Endothelial cell of umbilical vein (primary cell): ENCODE measurements at regions of chr3 and their contacts with region 1.

Region 1: DNA sequence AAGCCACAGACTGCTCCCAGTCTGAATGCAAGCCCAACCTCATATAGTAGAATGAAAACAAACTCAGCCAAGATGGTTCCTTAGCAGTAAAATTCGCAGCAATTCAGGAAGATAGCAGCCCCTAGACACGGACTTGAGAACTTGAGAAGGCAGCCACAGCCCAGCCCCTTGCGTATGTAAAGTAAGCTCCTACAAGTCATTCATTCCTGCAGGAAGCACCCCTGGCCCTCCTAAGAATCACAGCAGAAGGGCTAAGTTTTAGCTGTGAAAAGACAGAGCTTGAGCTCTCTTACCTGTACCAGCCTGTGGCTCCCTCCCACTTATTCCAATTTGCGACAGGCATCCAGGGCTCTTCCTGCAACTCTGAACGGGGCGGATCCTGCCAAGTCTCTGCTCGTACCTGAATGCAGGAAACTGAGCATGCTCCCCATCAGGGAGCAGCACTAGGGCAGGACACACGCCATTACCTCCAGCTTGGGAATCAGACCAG is 136.4 kb downstream of the MAGI1 start:
- DNase-seq: no peak
- H3K4me3 ChIP-seq: no peak overlapping the region
- H3K27ac ChIP-seq: no peak overlapping the region
- H3K4me1 ChIP-seq: peaks cover 37% of the 10 kb centered on the region
- H3K27me3 ChIP-seq: no peaks in the 10 kb centered on the region
- CTCF ChIP-seq: no peak
- POLR2A ChIP-seq: no peak

Region 2: GRCh38 chr3:65548848-65549625 is 353.3 kb before region 1 on chr3:
- CTCF ChIA-PET with region 1: no interaction called
- POLR2A ChIA-PET with region 1: no interaction called
- dilution Hi-C with region 1: no loop called
- intact Hi-C with region 1: no loop called
- DNase-seq: no peak
- H3K4me3 ChIP-seq: peak overlapping the region in 2 of 3 experiments; percentile 21 to 40
- H3K27ac ChIP-seq: no peak overlapping the region
- H3K4me1 ChIP-seq: peaks cover 2% of the 10 kb centered on the region
- H3K27me3 ChIP-seq: peaks cover 0 to 12% of the 10 kb centered on the region in 2 experiments
- CTCF ChIP-seq: no peak
- POLR2A ChIP-seq: no peak

Region 3: GRCh38 chr3:65888980-65889706 is 13.2 kb before region 1 on chr3:
- CTCF ChIA-PET with region 1: interaction called, 4 read pairs
- POLR2A ChIA-PET with region 1: no interaction called
- dilution Hi-C with region 1: no loop called
- intact Hi-C with region 1: loop called (anchors 1 kb)
- DNase-seq: peak; percentile 56
- H3K4me3 ChIP-seq: no peak overlapping the region
- H3K27ac ChIP-seq: no peak overlapping the region
- H3K4me1 ChIP-seq: peaks cover 9% of the 10 kb centered on the region
- H3K27me3 ChIP-seq: no peaks in the 10 kb centered on the region
- CTCF ChIP-seq: no peak
- POLR2A ChIP-seq: no peak